ENCODE measurements at regions of chr6 and their contacts with region 1.

Region 1: GRCh38 chr6:26342106-26343004 is 22.6 kb upstream of the BTN3A2 start:
- DNase-seq: no peak
- H3K4me3 ChIP-seq: peak overlapping the region in 2 of 3 experiments; percentile 26
- H3K27ac ChIP-seq: no peak overlapping the region
- H3K4me1 ChIP-seq: peaks cover 6% of the 10 kb centered on the region
- H3K27me3 ChIP-seq: no peaks in the 10 kb centered on the region
- CTCF ChIP-seq: no peak

Region 2: DNA sequence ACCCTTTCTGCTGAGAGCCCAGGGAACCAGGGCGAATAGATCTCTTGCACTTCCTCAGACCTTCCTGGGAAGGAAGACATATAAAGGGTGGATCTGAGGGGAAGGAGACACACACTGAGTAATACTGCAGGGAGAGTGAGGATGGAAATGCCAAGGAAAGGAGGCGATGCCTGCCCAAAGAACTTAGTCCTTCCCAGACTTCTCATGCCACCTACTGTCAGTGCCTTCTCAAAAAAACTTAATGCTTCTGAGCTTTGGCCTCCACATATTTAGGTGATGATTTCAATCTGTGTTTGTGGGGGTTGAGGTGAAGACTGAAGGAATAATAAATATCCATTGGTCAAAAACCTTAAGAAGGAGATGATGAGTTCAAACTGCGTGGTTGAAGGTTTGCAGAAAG is 69.4 kb after region 1 on chr6:
- CTCF ChIA-PET with region 1: interaction called, 3 read pairs
- dilution Hi-C with region 1: no loop called
- in situ Hi-C with region 1: no loop called
- intact Hi-C with region 1: loop called (anchors 1 kb)
- DNase-seq: peak; percentile 9
- H3K4me3 ChIP-seq: no peak overlapping the region
- H3K27ac ChIP-seq: no peak overlapping the region
- H3K4me1 ChIP-seq: no peaks in the 10 kb centered on the region
- H3K27me3 ChIP-seq: no peaks in the 10 kb centered on the region
- CTCF ChIP-seq: peak in 1 of 2 donors; percentile 14

Region 3: DNA sequence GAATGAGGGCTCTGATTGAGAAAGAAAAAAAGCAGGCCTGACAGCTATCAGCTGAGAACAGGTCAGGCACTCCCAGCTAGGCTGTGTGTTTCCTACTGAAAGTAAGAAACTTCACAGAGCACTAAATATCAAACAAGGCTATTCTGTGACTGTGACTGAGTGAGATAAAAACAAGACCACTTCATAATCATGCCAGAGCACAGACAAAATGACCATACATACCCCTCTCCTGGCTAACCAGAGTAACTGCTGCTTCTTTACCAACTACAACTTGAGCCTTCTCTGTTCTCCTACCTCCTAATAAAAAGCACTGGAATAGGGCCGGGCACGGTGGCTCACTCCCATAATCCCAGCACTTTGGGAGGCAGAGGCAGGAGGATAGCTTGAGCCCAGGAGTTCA is 150.9 kb after region 1 on chr6:
- CTCF ChIA-PET with region 1: no interaction called
- dilution Hi-C with region 1: no loop called
- in situ Hi-C with region 1: no loop called
- intact Hi-C with region 1: loop called (anchors 1 kb)
- DNase-seq: no peak
- H3K4me3 ChIP-seq: no peak overlapping the region
- H3K27ac ChIP-seq: no peak overlapping the region
- H3K4me1 ChIP-seq: no peaks in the 10 kb centered on the region
- H3K27me3 ChIP-seq: no peaks in the 10 kb centered on the region
- CTCF ChIP-seq: no peak

Region 4: DNA sequence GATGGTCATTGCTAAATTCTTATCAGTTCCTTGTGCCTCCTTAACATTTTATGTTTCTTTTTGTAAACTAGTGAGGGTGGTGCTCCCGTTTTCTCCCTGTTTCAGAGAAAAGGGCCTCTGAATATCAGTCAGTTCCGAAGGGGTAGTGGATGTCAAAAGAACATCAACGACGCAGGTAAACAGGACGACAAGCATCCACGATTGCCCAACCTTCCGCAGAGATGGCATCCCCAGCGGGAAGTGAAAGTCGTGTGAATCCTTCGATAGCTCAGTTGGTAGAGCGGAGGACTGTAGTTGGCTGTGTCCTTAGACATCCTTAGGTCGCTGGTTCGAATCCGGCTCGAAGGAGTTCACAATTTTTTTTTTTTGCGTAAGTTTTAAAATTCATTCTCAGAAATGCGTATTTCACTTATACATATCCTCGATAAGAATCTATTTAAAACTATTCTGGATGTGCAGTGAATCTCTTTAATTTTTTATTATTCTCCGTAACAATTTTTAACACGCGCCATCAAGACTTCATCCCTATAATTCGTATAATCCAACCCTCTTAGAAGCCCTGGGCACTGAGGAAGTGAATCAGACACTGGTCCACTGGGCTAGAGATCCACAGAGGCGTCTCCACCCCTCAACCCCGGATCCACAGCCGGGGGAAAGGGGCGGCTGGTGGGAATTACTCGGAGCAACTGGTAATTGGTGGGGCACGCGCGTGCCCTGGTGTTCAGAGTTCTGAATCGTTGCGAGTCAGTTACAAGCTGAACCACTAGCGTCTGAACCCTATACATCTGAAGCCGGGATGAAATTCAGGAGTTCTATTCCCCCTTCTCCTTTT is 226.5 kb after region 1 on chr6:
- CTCF ChIA-PET with region 1: interaction called, 3 read pairs
- dilution Hi-C with region 1: no loop called
- in situ Hi-C with region 1: loop called (anchors 10 kb)
- intact Hi-C with region 1: loop called (anchors 1 kb)
- DNase-seq: peak; percentile 85
- H3K4me3 ChIP-seq: peak overlapping the region; percentile 62 to 73 (median 71)
- H3K27ac ChIP-seq: no peak overlapping the region
- H3K4me1 ChIP-seq: no peaks in the 10 kb centered on the region
- H3K27me3 ChIP-seq: no peaks in the 10 kb centered on the region
- CTCF ChIP-seq: peak in 1 of 2 donors; percentile 27

Region 5: GRCh38 chr6:27078734-27079357 is 736.5 kb after region 1 on chr6:
- CTCF ChIA-PET with region 1: no interaction called
- dilution Hi-C with region 1: no loop called
- in situ Hi-C with region 1: loop called in 1 of 2 experiments (anchors 25 kb)
- intact Hi-C with region 1: loop called (anchors 5 kb)
- DNase-seq: peak; percentile 58
- H3K4me3 ChIP-seq: peak overlapping the region; percentile 49 to 55 (median 52)
- H3K27ac ChIP-seq: no peak overlapping the region
- H3K4me1 ChIP-seq: peaks cover 4% of the 10 kb centered on the region
- H3K27me3 ChIP-seq: no peaks in the 10 kb centered on the region
- CTCF ChIP-seq: peak; percentile 69 to 81